GM18951 (cell line): ENCODE measurements at regions of chr4 and their contacts with region 1.

Region 1: GRCh38 chr4:165131247-165131832 is 18.7 kb upstream of the TMEM192 start:
- POLR2A ChIP-seq: no peak

Region 2: DNA sequence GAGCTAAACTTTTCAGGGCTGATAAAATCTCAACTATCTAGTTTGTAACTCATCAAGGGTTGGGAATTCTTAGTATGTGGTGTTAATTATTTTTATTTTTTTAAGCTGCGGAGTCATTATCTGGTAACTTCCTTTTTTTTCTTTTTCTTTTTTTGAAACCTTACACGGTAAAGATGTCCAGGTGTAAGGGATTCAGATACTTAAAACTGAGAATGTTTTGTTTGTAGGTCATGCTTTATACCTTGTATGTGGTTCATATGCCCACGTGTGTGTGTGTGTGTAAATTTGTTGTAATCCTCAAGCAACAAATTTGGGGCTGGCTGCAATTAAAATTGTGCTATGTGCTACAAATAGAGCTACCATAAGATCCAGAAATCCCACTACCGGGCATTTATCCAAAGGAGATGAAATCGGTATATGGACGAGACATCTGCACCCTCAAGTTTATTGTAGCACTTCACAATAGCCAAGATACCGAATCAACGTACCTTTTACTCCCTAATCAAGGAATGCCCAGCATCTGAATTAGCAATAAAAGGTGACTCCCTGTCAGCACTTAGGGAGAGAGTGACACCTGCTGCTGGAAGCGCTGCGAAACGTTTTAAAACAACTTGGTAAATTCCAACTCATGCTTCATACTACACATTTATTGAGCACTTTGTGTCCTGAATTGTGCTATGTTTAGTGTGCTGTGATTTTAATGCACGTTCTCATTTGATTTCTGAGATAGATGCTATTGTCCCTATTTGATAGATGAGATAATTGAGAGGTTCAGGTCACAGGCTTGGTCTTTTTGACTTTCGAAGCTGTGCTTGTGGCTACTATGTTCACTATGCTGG is 212.2 kb after region 1 on chr4:
- in situ Hi-C with region 1: loop called (anchors 10 kb)
- POLR2A ChIP-seq: no peak

Region 3: GRCh38 chr4:165464813-165465381 is 333.6 kb after region 1 on chr4:
- in situ Hi-C with region 1: loop called (anchors 5 kb)
- POLR2A ChIP-seq: no peak

Region 4: DNA sequence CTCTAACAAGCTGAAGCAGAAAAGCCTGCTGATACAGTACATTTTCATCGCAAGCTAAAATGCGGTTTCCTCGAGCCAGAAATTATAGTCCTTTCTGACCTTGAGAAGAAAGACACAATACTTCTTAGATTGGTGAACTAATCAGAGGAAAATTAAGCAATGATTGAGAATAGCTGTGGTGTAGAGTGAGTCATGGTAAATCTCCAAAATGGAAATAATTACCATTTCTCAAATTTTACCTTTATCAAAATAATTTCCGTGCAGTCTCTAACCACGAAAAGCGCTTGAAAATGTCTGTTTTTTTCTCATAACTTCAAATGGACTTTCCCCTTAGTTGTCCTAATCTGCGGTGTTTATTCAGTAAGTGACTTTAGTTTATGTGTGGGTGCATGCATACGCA is 437.7 kb after region 1 on chr4:
- in situ Hi-C with region 1: no loop called
- POLR2A ChIP-seq: no peak